ENCODE measurements at regions of chr22 and their contacts with region 1.

Region 1: DNA sequence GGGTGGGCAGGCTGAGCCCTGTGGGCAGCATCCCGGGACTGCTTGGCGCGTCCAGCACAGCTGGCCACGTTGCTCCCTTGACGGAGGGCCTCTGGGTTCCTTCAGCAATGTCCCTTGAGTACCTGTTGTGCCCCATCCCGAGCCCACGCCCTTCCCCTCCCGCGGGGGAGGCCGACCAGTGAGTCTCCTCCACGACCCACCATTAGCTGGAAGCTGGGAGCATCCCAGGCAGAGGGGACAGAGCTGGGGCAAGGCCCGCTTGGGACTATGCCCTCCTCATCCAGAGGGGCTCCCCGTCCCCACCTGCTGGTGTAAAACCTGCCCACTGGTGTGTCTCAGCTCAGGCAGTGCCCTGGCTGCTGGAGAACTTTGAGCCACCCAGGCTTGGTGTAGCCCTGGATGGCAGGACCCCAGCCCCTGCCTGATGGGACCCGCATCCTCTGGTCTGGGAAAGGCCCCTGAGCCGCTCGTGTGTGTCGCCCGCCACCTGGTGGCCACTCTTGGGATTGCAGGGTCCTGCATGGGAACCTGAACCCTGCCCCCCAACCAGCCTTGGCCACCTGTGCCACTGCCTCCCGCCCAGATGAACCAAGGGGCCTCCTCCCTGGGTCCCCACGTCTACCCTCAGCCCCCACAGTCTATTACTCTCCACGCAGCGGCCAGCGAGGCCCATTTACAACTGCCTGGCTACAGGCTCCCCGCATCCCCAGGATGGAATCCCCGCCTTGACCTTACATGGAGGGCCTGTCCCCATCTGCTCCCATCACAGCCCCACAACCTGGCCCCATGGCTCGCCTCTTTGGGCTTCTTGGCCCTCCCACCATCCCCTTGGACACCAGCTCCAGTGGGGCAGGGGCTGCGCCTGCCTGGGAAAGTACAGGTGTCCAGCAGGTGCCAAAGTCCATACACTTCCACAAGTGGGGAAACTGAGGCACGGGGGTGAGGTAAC is 16.6 kb upstream of the ARHGAP8 start:
- DNase-seq: peak; percentile 74
- H3K4me3 ChIP-seq: no peak overlapping the region
- H3K27ac ChIP-seq: no peak overlapping the region
- H3K4me1 ChIP-seq: peaks cover 3% of the 10 kb centered on the region
- H3K27me3 ChIP-seq: peaks cover 61% of the 10 kb centered on the region
- CTCF ChIP-seq: peak; percentile 99

Region 2: GRCh38 chr22:44693756-44694155 is 42.1 kb before region 1 on chr22:
- intact Hi-C with region 1: loop called (anchors 2 kb)
- DNase-seq: no peak
- H3K4me3 ChIP-seq: no peak overlapping the region
- H3K27ac ChIP-seq: no peak overlapping the region
- H3K4me1 ChIP-seq: no peaks in the 10 kb centered on the region
- H3K27me3 ChIP-seq: peaks cover 18% of the 10 kb centered on the region
- CTCF ChIP-seq: no peak